ENCODE measurements at regions of chr19 and their contacts with region 1.

Region 1: DNA sequence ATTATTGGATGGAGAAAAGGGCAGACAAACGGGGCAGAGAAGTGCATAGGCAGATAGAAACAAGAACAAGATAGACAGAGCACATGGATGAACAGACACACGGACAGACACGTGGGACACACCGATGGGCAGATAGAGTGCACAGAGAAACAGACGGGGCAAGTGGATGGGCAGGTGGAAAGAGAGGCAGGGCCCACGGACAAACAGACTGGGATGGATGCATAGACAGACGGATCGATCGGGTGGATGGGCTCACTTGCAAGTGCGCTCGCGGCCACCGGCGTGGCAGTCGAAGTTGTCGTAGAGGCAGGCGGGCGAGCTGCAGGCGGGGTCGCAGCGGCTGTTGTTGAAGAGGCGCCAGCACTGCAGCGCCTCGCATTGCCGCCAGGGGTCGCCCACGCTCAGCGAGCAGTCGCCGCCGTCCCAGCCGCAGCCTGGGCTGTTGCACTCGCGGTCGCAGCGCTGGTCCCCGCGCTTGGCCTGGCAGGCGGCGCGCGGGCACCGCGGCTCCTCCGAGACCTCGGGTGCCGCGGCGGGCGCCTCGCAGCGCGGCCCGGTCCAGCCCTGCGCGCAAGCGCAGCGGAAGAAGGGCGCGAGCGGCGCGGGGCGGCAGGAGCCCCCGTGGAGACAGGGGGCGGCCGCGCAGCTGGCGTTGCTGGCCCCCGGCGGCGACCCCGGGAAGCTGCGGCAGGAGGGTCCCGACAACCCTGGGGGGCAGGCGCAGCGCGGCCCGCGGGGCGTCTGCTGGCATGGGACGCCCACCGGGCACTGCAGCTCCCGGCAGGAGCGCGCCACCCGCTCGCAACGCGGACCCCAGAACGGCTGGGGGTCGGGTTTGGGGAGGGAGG is 23.3 kb downstream of the NOTCH3 start:
- DNase-seq: peak; percentile 82 to 85 (median 83)
- ATAC-seq: peak; percentile 90 to 98 (median 94)
- H3K4me3 ChIP-seq: peak overlapping the region in 1 of 3 donors; percentile 40
- H3K27ac ChIP-seq: no peak overlapping the region
- H3K4me1 ChIP-seq: peaks cover 0 to 3% (median 0%) of the 10 kb centered on the region in 4 donors
- H3K27me3 ChIP-seq: no peaks in the 10 kb centered on the region
- CTCF ChIP-seq: peak; percentile 96 to 99 (median 98)
- POLR2A ChIP-seq: no peak

Region 2: DNA sequence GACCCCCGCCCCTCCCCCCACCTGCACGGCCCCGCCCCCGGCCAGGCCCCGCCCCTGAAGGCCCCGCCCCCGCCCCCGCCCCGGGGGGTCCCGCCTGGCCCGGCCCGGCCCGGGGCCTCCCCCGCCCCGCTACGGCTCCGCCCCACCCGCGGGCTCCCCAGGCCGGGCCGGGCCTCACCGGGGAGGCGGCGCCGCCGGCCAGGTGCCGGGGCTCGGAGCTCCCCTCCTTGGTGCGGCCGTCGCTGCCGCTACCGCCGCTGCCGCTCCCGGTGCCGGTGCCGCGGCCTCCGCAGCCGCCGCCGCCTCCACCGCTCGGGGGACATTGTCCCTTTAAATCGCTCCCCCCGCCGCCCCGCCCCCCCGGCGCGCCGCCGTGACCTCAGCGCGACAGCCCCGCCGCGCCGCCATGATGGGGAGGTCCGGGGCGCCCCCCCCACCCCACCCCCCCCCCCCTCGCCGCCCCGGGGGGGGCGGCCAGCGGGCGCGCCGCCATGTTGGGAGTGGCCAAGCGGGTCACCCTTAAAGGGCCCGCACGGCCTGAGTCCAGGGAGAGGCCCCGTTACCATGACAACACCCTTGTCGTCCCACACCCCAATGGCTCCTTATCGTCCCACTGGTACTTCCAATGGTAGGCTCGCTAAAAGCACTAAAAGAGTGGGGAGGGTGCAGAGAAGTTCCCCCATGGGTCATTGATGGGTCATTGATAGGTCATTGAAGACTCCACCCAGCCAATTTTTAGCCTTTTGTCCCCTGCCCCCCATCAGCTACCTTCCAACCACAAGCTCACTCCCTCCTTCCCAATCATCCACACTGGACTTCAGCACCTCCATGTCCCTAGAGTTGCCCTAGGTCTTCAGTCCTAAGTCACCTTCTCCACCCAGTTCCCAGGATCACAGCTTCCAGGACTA is 272.4 kb after region 1 on chr19 and contains the start of gene WIZ:
- intact Hi-C with region 1: loop called in 1 of 2 experiments (anchors 10 kb)
- DNase-seq: peak; percentile 80 to 83 (median 80)
- ATAC-seq: peak in 3 of 4 donors; percentile 4 to 30 (median 5)
- H3K4me3 ChIP-seq: peak within 1 kb of the TSS; percentile 40 to 56 (median 48)
- H3K27ac ChIP-seq: peak within 1 kb of the TSS in 1 of 3 donors; percentile 68
- H3K4me1 ChIP-seq: peaks cover 0 to 30% (median 6%) of the 10 kb centered on the region in 4 donors
- H3K27me3 ChIP-seq: no peaks in the 10 kb centered on the region
- CTCF ChIP-seq: no peak
- POLR2A ChIP-seq: no peak
- total RNA-seq, gene WIZ: 12.5 to 24.4 (median 14.6) TPM

Measured in right lobe of liver (tissue), 6 donors.